Posterior vena cava (tissue), 2 donors: ENCODE measurements at regions of chr3 and their contacts with region 1.

Region 1: DNA sequence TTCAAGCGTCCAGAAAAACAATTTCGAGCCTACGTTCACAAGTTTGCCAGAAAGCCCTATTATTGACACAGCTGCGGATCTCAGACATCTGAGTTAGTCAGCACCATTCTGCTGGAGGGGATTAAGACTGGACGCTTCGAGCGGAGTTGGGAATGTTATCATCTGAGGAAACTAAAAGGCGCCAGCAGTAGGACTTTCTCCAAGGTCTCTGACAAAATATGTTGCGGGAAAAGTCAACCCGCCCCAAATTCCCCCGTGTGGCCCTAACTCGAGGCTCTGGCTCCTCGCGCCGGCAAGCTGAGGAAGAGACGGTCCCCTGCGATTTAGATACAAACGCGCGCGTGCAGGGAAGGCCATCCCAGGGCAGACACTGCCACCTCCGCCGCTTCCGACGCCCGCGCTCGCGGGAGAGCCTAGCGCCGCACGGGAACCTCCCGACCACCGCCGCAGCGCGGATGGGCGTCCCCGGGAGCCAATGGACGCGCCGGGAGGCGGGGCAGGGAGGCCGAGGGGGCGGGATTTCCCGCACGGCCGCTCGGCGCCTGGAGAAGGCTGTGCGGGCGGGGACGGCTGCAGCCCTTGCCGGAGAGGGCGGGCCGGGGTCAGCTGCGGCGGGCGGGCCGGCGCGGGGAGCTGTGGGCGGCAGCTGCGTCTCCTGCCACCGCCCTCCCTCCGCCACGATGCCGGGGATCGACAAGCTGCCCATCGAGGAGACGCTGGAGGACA is at the start of gene APPL1:
- DNase-seq: peak; percentile 97
- total RNA-seq, gene APPL1: 43.5 to 50.6 TPM

Region 2: DNA sequence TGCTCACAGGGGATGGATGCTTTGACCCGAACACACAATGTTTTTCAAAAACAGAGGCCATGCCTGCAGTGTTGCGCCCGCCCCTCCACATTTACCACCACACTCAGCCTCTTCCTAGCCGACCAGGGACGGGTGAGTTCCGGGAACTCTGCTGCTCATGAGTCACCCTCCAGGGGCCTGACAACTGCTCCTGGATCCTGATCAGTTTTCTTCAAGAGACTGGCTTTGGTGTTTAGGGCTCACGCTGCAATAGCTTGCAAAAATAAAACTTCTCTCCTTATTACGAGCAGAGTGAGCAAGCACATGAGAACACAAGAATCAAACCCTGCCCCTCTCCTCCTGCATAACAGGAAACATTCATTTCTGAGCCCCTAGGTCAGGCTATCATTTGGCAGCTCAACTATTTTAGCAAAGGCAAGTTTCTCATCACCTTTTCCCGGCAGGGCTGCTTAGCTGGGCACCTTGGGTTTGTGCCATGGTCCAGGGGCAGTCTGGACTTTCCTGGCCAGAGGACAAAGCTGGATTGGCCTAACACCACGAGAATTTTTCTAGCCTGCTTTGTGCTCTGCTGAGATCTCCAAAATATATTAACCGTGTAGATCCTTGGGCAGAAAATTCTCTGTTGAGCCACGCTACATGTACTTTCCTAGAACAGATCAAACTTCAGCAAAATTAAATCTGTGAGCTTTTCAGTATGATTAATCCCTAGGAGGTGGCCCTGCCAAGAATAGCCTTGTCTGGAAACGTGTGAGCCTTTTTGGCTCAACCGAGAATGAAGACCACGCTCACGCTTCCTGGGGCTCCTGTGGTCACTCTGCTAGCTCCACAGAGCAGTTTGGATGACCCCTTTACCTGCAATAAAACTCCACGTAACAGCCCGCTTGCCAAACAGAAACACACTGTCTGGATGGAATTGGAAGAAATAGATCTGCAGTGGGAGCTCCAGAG is 219.6 kb before region 1 on chr3:
- intact Hi-C with region 1: loop called in 1 of 2 experiments (anchors 10 kb)
- DNase-seq: peak; percentile 94

Region 3: DNA sequence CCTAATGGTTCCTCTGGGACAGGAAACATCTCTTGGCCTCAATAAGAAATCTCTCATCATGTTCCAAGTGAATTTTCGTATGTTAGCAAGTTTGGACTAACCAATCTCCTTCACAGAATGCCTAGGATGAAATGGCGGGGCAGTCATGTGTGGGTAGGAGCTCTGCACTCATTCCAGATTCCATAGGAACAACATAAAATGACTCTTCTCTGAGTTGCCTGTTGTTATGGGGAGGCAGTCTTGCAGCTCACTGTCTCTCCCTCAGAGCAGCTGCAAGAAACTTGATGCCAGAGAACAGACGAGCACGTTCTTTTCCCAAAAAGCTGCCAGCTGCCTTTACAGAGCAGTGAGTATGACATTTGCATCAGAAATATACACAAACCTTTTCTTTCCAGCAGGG is 132.8 kb before region 1 on chr3:
- intact Hi-C with region 1: loop called in 1 of 2 experiments (anchors 10 kb)
- DNase-seq: no peak

Region 4: DNA sequence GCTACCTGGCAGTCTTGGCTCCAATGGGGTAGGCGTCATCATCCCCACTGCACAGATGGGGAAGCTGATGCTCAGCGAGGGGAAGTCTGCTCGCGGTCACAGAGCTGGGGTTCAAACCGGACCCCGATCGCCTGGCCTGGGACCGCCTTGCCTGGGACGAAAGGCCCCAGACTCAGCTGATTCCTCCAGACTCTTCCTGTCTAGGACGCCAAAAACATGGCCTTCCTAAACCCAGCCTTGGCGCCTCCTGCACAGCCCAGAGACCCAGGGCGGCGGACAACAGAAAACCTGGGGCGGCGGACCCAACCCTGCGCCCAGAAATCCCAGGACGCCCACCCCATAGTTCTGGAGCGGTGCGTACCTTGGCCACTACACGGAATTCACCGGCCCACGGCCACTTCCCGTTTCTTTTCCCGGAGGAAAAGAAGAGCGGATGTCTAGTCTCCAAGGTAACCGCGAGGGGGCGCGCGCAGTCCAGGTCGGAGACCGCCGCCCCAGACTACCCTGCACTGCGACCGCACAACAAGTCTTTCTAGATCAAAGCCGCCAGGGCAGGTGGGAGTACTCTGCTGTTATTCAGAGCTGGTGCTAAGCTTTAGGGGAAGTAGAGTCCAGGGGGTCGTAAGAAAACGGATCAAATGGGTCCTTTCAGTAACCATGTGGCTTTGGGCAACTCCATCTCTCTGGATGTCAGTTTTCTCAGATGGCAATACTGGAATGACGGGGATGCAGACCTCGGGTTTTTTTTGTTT is 57.3 kb before region 1 on chr3:
- intact Hi-C with region 1: loop called in 1 of 2 experiments (anchors 10 kb)
- DNase-seq: peak; percentile 88

Region 5: DNA sequence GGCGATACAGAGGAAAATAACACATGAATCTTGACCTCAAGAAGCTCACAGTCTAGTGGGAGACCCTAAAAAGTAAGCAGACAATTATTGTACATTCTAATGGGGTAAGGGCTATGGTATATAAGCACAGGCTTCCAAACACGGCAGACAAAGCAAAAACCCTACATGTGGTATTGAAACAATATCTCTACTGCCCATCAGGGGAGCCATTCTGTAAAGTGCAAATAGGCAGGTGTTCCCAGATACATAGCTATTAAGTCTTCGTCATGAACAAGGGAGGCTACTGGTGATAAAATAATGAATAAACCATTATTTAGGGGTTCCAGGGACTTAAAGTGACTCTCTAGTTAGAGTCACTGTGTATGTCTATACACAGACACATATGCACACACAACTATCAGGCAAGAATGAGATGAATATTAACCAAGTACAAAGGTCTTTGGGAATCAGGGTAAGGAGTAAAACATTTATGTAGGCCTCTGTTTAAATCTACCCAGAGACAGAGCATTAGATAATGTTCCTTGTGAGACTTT is 103.8 kb after region 1 on chr3:
- intact Hi-C with region 1: no loop called
- DNase-seq: no peak

Region 6: DNA sequence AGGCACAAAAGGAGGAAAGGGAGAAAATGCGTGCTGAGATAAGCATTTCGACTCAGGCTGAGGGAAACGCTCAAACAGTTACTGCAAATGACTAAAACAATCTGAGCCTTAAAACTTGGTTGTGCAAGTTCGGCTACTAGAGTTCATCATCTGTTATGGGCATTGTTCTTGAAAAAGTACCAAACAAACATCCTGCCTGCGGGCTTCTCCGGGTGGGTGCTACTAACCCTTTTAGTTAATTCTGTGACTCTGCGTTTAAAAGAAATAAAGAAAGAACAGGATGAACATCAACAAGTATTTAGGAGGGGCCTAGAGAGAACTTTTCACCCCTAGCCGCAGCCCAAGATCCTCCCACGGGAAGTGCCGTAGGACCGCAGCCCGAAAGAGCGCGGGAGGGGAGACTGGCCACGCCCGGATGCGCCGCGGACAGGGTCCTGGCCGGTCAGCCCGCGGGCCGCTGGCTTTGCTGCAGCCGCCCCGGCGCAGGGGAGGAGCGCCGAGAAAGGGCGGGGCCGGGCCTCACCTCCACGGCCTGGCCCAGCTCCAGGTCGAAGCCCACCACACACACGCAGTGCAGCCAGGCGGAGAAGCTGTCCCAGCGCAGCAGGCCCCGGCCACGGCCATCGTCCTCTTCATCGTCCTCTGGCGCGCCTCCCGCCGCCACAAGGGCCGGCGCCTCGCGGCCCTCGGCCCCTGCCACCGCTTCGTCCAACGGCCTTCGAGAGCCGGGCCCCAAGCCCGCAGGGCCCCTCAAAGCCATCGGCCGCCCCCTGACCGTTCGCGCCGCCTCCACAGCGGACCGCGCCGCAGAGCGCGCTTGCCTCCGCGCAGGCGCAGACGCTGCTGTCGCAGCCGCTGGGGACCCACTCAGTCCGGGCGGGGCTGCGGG is 465.1 kb after region 1 on chr3 and contains the start of gene DENND6A:
- intact Hi-C with region 1: no loop called
- DNase-seq: peak; percentile 99
- total RNA-seq, gene DENND6A: 32.5 to 35.9 TPM